CD8-positive, alpha-beta T cell (primary cell): ENCODE measurements at regions of chr1 and their contacts with region 1.

Region 1: DNA sequence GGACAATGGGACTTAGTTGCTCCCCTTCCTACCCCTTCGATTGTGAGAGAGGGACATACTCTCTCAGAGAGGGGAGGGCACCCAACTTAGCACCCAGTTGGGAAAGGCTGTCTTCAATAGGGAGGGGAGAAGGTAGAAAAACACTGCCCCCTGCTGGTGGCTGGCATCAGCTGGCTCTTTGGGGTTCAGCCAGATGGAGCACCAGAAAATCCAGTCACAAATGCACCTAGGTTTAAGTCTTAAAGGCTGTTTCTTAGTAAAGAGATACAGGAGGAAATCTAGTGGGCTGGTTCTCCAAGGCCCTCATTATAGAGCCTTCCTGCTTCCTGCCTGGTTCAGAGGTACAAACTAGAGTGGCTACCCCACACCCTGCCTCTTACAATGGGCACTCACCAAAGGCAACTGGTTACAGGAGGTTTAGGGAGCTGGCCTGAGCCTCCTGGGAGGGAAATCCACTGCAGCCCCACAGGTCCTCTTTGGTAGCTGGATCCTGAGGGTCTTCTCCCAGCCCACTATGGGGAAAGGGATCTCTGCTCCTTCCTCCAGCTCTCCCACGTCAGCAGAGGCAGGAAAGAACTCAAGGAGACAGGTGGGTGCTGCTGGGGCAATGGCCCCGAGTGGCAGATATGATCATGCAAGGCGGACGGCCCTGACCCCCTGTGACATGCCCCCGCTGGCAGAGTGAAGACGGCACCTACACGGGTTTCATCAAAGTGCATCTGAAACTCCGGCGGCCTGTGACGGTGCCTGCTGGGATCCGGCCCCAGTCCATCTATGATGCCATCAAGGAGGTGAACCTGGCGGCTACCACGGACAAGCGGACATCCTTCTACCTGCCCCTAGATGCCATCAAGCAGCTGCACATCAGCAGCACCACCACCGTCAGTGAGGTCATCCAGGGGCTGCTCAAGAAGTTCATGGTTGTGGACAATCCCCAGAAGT is 28.3 kb downstream of the EIF2D start:
- DNase-seq: peak; percentile 70 to 93 (median 89)
- ATAC-seq: peak; percentile 18
- H3K4me3 ChIP-seq: no peak overlapping the region
- H3K4me3 Mint-ChIP-seq: peak overlapping the region; percentile 77
- H3K27ac ChIP-seq: peak overlapping the region; percentile 3 to 95
- H3K27ac Mint-ChIP-seq: peak overlapping the region; percentile 96
- H3K4me1 ChIP-seq: peaks cover 50% of the 10 kb centered on the region
- H3K4me1 Mint-ChIP-seq: peaks cover 68% of the 10 kb centered on the region
- H3K27me3 ChIP-seq: no peaks in the 10 kb centered on the region
- H3K27me3 Mint-ChIP-seq: no peaks in the 10 kb centered on the region
- CTCF ChIP-seq: peak; percentile 92

Region 2: DNA sequence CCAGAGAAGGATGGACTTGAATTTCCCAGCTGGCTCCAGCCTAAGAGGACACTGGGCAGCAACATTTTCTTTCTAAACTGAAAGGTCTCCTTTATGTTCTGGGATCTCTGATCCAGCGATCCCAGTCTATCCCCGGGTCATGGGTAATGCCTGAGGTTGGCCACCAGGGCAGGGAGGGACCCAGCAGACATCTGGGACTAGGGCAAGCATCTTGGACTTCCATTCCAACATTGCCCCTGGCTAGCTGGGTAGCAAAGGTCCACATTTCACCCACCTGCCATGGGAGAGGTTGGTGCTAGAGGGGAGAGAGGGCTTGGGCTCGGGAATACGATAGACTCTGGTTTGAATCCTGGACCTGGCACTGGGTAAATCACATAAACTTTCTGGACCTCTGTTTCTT is 1983.0 kb before region 1 on chr1:
- CTCF ChIA-PET with region 1: no interaction called
- POLR2A ChIA-PET with region 1: no interaction called
- intact Hi-C with region 1: no loop called
- DNase-seq: no peak
- ATAC-seq: no peak
- H3K4me3 ChIP-seq: no peak overlapping the region
- H3K4me3 Mint-ChIP-seq: no peak overlapping the region
- H3K27ac ChIP-seq: no peak overlapping the region
- H3K27ac Mint-ChIP-seq: no peak overlapping the region
- H3K4me1 ChIP-seq: no peaks in the 10 kb centered on the region
- H3K4me1 Mint-ChIP-seq: no peaks in the 10 kb centered on the region
- H3K27me3 ChIP-seq: no peaks in the 10 kb centered on the region
- H3K27me3 Mint-ChIP-seq: peaks cover 2% of the 10 kb centered on the region
- CTCF ChIP-seq: no peak

Region 3: GRCh38 chr1:206461602-206462455 is 122.1 kb before region 1 on chr1:
- CTCF ChIA-PET with region 1: interaction called, 23 read pairs
- POLR2A ChIA-PET with region 1: no interaction called
- intact Hi-C with region 1: loop called in 1 of 2 experiments (anchors 1 kb)
- DNase-seq: peak; percentile 54 to 82 (median 74)
- ATAC-seq: peak; percentile 95
- H3K4me3 ChIP-seq: no peak overlapping the region
- H3K4me3 Mint-ChIP-seq: no peak overlapping the region
- H3K27ac ChIP-seq: no peak overlapping the region
- H3K27ac Mint-ChIP-seq: no peak overlapping the region
- H3K4me1 ChIP-seq: peaks cover 10% of the 10 kb centered on the region
- H3K4me1 Mint-ChIP-seq: peaks cover 19% of the 10 kb centered on the region
- H3K27me3 ChIP-seq: no peaks in the 10 kb centered on the region
- H3K27me3 Mint-ChIP-seq: no peaks in the 10 kb centered on the region
- CTCF ChIP-seq: peak; percentile 75

Region 4: DNA sequence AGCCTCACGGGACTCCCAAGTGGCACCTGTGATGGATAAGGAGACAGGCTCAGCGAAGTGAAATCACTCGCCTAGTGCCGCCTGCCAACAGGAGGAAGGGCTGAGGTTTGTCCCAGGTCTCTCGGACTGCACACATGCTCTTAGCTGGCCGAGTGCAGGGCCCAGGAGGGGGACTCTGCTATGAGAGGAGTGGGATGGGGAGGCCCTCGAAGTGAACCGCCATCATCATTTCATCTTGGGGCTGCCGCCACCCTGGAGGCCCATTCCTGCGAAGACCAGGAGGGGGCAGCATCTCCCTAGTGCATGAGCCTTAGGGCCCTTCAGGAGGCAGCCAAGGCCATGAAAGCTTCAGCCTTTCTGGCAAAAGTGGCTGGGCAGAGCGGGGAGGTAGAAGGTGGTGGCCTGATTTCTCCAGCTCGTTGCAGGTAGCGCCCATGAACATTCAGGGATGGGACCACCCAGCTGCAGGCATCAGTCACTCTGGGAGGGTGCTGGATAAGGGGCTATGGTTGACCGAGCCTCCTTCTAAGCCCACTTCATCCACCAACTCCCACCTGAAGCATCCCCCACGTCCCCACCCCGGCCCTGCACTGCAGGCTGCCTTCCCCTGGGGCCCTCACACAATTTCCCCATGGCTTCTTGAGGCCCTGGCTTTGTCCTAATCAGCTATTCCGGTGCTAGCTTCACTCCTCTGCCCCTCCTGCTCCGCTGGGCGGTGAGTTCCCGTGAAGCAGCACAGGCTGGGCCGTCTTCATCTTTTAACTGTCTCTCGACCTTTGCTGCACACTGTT is 93.8 kb before region 1 on chr1:
- CTCF ChIA-PET with region 1: interaction called, 20 read pairs
- POLR2A ChIA-PET with region 1: no interaction called
- intact Hi-C with region 1: loop called (anchors 2 kb)
- DNase-seq: peak; percentile 47 to 76 (median 71)
- ATAC-seq: peak; percentile 91
- H3K4me3 ChIP-seq: no peak overlapping the region
- H3K4me3 Mint-ChIP-seq: no peak overlapping the region
- H3K27ac ChIP-seq: no peak overlapping the region
- H3K27ac Mint-ChIP-seq: peak overlapping the region; percentile 18
- H3K4me1 ChIP-seq: no peaks in the 10 kb centered on the region
- H3K4me1 Mint-ChIP-seq: no peaks in the 10 kb centered on the region
- H3K27me3 ChIP-seq: no peaks in the 10 kb centered on the region
- H3K27me3 Mint-ChIP-seq: no peaks in the 10 kb centered on the region
- CTCF ChIP-seq: peak; percentile 67

Region 5: GRCh38 chr1:206551986-206552326 is 32.0 kb before region 1 on chr1:
- CTCF ChIA-PET with region 1: interaction called, 709 read pairs
- POLR2A ChIA-PET with region 1: interaction called, 320 read pairs
- intact Hi-C with region 1: loop called (anchors 1 kb)
- DNase-seq: peak; percentile 60 to 96 (median 76)
- ATAC-seq: peak; percentile 83
- H3K4me3 ChIP-seq: no peak overlapping the region
- H3K4me3 Mint-ChIP-seq: peak overlapping the region; percentile 55
- H3K27ac ChIP-seq: peak overlapping the region; percentile 33 to 84
- H3K27ac Mint-ChIP-seq: peak overlapping the region; percentile 95
- H3K4me1 ChIP-seq: peaks cover 54% of the 10 kb centered on the region
- H3K4me1 Mint-ChIP-seq: peaks cover 69% of the 10 kb centered on the region
- H3K27me3 ChIP-seq: no peaks in the 10 kb centered on the region
- H3K27me3 Mint-ChIP-seq: no peaks in the 10 kb centered on the region
- CTCF ChIP-seq: no peak

Region 6: DNA sequence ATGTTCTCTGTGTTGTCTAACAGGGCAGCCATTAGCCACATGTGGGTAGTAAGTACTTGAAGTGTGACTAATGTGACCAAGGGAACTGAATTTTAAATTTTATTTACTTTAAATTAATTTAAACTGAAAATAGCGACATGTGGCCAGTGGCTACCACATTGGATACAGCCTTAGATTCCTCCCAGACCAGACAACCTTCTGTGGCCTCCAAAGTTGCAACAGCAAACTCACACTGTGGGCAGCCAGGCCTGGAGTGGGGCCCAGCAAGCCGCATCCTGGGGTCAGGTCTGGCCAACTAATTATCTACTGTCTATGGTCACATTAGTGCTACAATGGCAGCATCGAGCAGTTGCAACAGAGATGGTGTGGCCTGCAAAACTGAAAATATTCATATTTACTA is 16.5 kb after region 1 on chr1:
- CTCF ChIA-PET with region 1: interaction called, 40 read pairs
- POLR2A ChIA-PET with region 1: no interaction called
- intact Hi-C with region 1: no loop called
- DNase-seq: no peak
- ATAC-seq: no peak
- H3K4me3 ChIP-seq: no peak overlapping the region
- H3K4me3 Mint-ChIP-seq: no peak overlapping the region
- H3K27ac ChIP-seq: no peak overlapping the region
- H3K27ac Mint-ChIP-seq: no peak overlapping the region
- H3K4me1 ChIP-seq: no peaks in the 10 kb centered on the region
- H3K4me1 Mint-ChIP-seq: no peaks in the 10 kb centered on the region
- H3K27me3 ChIP-seq: no peaks in the 10 kb centered on the region
- H3K27me3 Mint-ChIP-seq: no peaks in the 10 kb centered on the region
- CTCF ChIP-seq: no peak